T-cell (primary cell): ENCODE measurements at regions of chr1 and their contacts with region 1.

Region 1: DNA sequence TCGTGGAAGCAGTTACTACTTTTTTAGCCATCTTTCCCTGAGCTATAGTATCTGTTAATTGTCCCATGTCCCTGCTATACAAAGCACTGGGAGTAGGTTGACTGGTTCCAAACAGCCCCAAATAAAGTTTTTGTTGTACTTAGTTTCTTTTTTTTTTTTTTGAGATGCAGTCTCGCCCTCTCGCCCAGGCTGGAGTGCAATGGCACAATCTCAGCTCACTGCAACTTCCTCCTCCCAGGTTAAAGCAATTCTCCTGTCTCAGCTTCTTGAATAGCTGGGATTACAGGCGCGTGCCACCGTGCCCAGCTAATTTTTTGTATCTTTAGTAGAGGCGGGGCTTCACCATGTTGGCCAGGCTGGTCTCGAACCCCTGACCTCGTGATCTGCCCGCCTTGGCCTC is 3.3 kb downstream of the NCSTN start:
- DNase-seq: no peak
- ATAC-seq: no peak
- H3K4me3 ChIP-seq: no peak overlapping the region
- H3K4me3 Mint-ChIP-seq: no peak overlapping the region
- H3K27ac ChIP-seq: no peak overlapping the region
- H3K27ac Mint-ChIP-seq: no peak overlapping the region
- H3K4me1 ChIP-seq: peaks cover 10 to 19% of the 10 kb centered on the region in 2 experiments
- H3K4me1 Mint-ChIP-seq: peaks cover 25 to 46% (median 41%) of the 10 kb centered on the region in 3 donors
- H3K27me3 ChIP-seq: no peaks in the 10 kb centered on the region
- H3K27me3 Mint-ChIP-seq: no peaks in the 10 kb centered on the region

Region 2: DNA sequence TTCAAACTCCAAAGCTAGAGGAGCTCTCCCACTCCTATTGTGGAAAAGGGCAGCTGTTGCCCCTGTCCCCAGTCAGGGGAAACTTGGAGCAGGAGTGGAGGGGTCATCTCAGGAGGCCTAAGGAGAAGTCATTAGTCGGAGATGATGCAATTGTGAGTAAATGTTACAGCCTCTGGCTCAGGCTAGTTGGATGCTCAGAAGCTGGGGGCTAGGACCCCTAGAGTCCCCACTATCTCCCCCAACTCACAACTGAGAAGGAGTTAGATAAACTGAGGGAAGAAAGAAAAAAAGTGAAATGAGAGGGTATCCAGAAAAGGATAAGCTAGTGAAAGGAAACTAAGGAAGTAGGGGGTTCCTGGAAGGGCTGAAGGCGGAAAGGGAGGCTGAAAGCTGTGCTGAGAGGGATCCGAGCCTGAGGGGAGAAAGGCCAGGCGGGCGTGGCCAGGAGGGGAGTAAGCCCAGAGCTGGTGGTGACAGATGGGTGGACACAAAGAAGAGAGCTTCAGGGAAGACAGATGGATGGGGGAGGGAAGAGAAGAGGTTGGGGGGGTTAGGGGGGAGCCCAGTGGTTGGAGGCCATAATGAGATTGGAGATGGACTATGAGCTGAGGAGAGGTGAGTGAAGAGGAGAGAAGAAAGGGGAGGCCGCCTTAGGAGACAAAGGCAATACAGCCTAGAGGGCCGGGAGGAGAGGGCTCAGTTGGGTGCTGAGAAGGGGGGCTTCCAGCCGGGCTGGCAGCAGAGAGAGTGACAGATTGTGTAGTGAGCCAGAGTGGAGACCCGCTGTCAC is 15.9 kb after region 1 on chr1:
- CTCF ChIA-PET with region 1: no interaction called
- POLR2A ChIA-PET with region 1: no interaction called
- DNase-seq: no peak
- ATAC-seq: no peak
- H3K4me3 ChIP-seq: no peak overlapping the region
- H3K4me3 Mint-ChIP-seq: no peak overlapping the region
- H3K27ac ChIP-seq: no peak overlapping the region
- H3K27ac Mint-ChIP-seq: no peak overlapping the region
- H3K4me1 ChIP-seq: no peaks in the 10 kb centered on the region
- H3K4me1 Mint-ChIP-seq: peaks cover 0 to 6% (median 3%) of the 10 kb centered on the region in 3 donors
- H3K27me3 ChIP-seq: no peaks in the 10 kb centered on the region
- H3K27me3 Mint-ChIP-seq: no peaks in the 10 kb centered on the region

Region 3: GRCh38 chr1:160375788-160376524 is 29.5 kb after region 1 on chr1:
- CTCF ChIA-PET with region 1: interaction called in 1 of 2 experiments, 3 read pairs
- POLR2A ChIA-PET with region 1: interaction called in 1 of 2 experiments, 10 read pairs
- DNase-seq: peak in 1 of 35 experiments; percentile 23
- ATAC-seq: peak in 3 of 4 experiments; percentile 26 to 42 (median 41)
- H3K4me3 ChIP-seq: no peak overlapping the region
- H3K4me3 Mint-ChIP-seq: peak overlapping the region in 1 of 3 donors; percentile 8
- H3K27ac ChIP-seq: no peak overlapping the region
- H3K27ac Mint-ChIP-seq: peak overlapping the region in 1 of 2 donors; percentile 57
- H3K4me1 ChIP-seq: peaks cover 2 to 11% of the 10 kb centered on the region in 2 experiments
- H3K4me1 Mint-ChIP-seq: peaks cover 14 to 15% (median 14%) of the 10 kb centered on the region in 3 donors
- H3K27me3 ChIP-seq: peaks cover 0 to 7% of the 10 kb centered on the region in 2 experiments
- H3K27me3 Mint-ChIP-seq: peaks cover 0 to 3% of the 10 kb centered on the region in 2 donors